A673 (cell line): ENCODE measurements at regions of chr20 and their contacts with region 1.

Region 1: GRCh38 chr20:45229264-45230056 is 8.3 kb downstream of the SEMG2 start:
- DNase-seq: peak; percentile 61
- H3K4me3 ChIP-seq: no peak overlapping the region
- H3K27ac ChIP-seq: no peak overlapping the region
- H3K4me1 ChIP-seq: no peaks in the 10 kb centered on the region
- H3K27me3 ChIP-seq: peaks cover 73% of the 10 kb centered on the region
- CTCF ChIP-seq: peak; percentile 84

Region 2: DNA sequence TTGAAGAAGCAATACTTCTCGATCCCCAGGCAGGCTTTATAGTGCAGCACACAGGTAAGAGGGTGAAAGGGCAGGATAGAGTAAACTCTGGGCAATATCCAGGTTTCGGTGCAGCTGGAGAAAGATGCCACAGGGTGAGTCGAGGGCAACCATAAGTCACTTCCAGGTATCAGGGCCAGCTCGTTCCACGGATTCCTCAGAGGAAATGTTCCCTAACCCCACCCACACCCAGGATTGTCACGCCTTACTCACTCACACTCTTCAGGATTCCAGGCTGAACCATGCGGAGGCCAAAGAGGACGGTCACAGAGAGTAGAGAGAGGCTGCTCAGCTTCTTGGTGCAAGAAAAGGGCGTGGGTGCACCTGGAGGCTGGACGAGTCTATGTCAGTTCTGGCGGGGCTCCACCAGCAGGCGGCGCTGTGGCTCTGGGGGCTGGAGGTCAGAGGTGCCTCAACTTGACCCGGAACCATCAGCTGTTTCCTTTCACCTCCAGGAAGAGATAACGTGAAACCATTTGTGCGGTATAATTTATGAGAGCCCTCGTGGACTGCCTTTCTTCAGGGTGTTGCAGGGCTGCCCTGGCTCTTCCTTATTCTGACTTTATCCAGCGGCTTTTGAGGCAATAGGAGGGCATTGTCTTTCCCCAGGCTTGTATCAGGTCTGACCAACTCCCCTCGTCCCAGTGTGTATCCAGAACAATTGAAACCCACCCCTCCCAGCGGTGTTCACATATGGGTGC is 90.7 kb before region 1 on chr20:
- CTCF ChIA-PET with region 1: interaction called, 13 read pairs
- POLR2A ChIA-PET with region 1: no interaction called
- intact Hi-C with region 1: loop called (anchors 2 kb)
- DNase-seq: peak; percentile 60
- H3K4me3 ChIP-seq: no peak overlapping the region
- H3K27ac ChIP-seq: no peak overlapping the region
- H3K4me1 ChIP-seq: no peaks in the 10 kb centered on the region
- H3K27me3 ChIP-seq: peaks cover 12% of the 10 kb centered on the region
- CTCF ChIP-seq: peak; percentile 96

Region 3: GRCh38 chr20:45269056-45269455 is 39.6 kb after region 1 on chr20:
- CTCF ChIA-PET with region 1: no interaction called
- POLR2A ChIA-PET with region 1: interaction called, 11 read pairs
- intact Hi-C with region 1: no loop called
- DNase-seq: no peak
- H3K4me3 ChIP-seq: no peak overlapping the region
- H3K27ac ChIP-seq: no peak overlapping the region
- H3K4me1 ChIP-seq: no peaks in the 10 kb centered on the region
- H3K27me3 ChIP-seq: peaks cover 18% of the 10 kb centered on the region
- CTCF ChIP-seq: no peak